ENCODE measurements at regions of chr14 and their contacts with region 1.

Region 1: DNA sequence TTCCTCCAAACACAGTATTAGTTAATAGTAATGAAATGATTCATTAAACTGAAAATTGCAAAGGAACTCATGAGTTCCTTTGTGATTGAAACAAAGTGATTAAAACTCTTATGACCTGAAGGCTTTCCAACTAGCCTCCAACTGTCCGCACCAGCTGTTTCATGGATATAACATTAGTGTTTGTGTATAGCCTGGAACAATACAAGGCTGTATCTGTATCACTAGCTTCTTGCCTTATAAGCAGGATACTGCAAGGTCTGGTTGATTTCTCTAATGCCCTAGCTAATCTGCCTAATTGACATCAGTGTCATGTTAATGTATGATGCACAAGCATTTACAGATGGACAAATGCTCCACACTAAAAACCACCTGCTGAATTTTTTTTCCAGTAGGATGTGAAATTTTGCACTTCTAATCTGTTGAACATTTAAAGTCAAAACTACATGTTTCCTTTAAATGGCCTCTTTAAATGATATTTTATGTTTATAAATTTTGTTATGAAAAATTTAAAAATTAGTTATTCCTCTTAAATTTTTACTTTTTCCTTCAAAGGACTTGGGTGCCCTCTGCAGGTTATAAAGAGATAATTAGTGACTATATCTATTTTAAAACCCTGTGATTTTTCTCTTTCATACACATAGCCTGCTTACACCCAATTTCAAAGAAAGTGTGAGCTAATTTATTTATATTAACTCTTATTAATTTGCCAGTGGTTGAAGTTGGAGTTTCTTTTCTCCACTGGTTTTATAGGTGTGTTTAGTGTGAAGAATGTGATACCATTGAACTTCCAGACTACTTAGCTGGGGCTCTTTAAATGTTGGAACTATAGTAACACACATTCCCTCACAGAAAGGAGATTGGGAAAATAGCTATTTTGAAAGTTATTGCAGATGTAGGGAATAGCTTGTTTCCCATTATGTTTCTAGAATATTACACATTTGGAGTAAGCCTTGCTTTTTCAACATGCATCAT is 25.4 kb downstream of the AP5M1 start:
- DNase-seq: peak in 2 of 9 experiments; percentile 19 to 28
- ATAC-seq: no peak
- H3K4me3 ChIP-seq: no peak overlapping the region
- H3K4me3 Mint-ChIP-seq: no peak overlapping the region
- H3K27ac ChIP-seq: no peak overlapping the region
- H3K27ac Mint-ChIP-seq: no peak overlapping the region
- H3K4me1 ChIP-seq: no peaks in the 10 kb centered on the region
- H3K4me1 Mint-ChIP-seq: no peaks in the 10 kb centered on the region
- H3K27me3 ChIP-seq: no peaks in the 10 kb centered on the region
- H3K27me3 Mint-ChIP-seq: no peaks in the 10 kb centered on the region
- CTCF ChIP-seq: peak; percentile 53

Region 2: GRCh38 chr14:56963381-56963780 is 330.8 kb before region 1 on chr14:
- CTCF ChIA-PET with region 1: no interaction called
- POLR2A ChIA-PET with region 1: no interaction called
- intact Hi-C with region 1: no loop called
- DNase-seq: no peak
- ATAC-seq: no peak
- H3K4me3 ChIP-seq: no peak overlapping the region
- H3K4me3 Mint-ChIP-seq: no peak overlapping the region
- H3K27ac ChIP-seq: no peak overlapping the region
- H3K27ac Mint-ChIP-seq: no peak overlapping the region
- H3K4me1 ChIP-seq: no peaks in the 10 kb centered on the region
- H3K4me1 Mint-ChIP-seq: no peaks in the 10 kb centered on the region
- H3K27me3 ChIP-seq: no peaks in the 10 kb centered on the region
- H3K27me3 Mint-ChIP-seq: peaks cover 8% of the 10 kb centered on the region
- CTCF ChIP-seq: no peak

Region 3: GRCh38 chr14:57209561-57209960 is 84.6 kb before region 1 on chr14:
- CTCF ChIA-PET with region 1: no interaction called
- POLR2A ChIA-PET with region 1: no interaction called
- intact Hi-C with region 1: loop called in 1 of 2 experiments (anchors 5 kb)
- DNase-seq: no peak
- ATAC-seq: no peak
- H3K4me3 ChIP-seq: no peak overlapping the region
- H3K4me3 Mint-ChIP-seq: no peak overlapping the region
- H3K27ac ChIP-seq: no peak overlapping the region
- H3K27ac Mint-ChIP-seq: no peak overlapping the region
- H3K4me1 ChIP-seq: no peaks in the 10 kb centered on the region
- H3K4me1 Mint-ChIP-seq: no peaks in the 10 kb centered on the region
- H3K27me3 ChIP-seq: no peaks in the 10 kb centered on the region
- H3K27me3 Mint-ChIP-seq: no peaks in the 10 kb centered on the region
- CTCF ChIP-seq: no peak

Region 4: DNA sequence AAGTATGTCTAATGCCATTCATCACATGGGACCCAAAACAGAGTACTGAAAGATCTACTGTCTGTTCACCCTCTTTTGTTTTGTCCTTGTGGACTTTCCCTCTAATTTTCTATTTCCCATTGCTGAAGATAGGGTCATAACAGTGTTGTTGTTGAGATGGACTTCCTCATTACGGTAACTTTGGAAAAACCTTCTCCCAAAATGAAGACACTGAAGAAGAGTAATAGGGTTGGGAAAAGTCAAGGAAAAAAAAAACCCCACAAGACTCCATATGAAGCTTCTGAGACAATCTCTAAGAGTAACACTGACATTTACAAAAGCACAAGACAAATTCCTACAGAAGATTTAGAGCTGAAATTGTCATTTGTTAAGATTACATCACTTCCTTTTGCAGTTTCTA is 62.1 kb before region 1 on chr14:
- CTCF ChIA-PET with region 1: no interaction called
- POLR2A ChIA-PET with region 1: no interaction called
- intact Hi-C with region 1: loop called in 1 of 2 experiments (anchors 5 kb)
- DNase-seq: no peak
- ATAC-seq: no peak
- H3K4me3 ChIP-seq: no peak overlapping the region
- H3K4me3 Mint-ChIP-seq: no peak overlapping the region
- H3K27ac ChIP-seq: no peak overlapping the region
- H3K27ac Mint-ChIP-seq: no peak overlapping the region
- H3K4me1 ChIP-seq: no peaks in the 10 kb centered on the region
- H3K4me1 Mint-ChIP-seq: no peaks in the 10 kb centered on the region
- H3K27me3 ChIP-seq: no peaks in the 10 kb centered on the region
- H3K27me3 Mint-ChIP-seq: no peaks in the 10 kb centered on the region
- CTCF ChIP-seq: no peak

Region 5: GRCh38 chr14:58353516-58354299 is 1059.6 kb after region 1 on chr14:
- CTCF ChIA-PET with region 1: no interaction called
- POLR2A ChIA-PET with region 1: no interaction called
- intact Hi-C with region 1: no loop called
- DNase-seq: peak in 2 of 9 experiments; percentile 6 to 36
- ATAC-seq: no peak
- H3K4me3 ChIP-seq: no peak overlapping the region
- H3K4me3 Mint-ChIP-seq: peak overlapping the region; percentile 72
- H3K27ac ChIP-seq: peak overlapping the region in 1 of 2 experiments; percentile 53
- H3K27ac Mint-ChIP-seq: peak overlapping the region; percentile 66
- H3K4me1 ChIP-seq: no peaks in the 10 kb centered on the region
- H3K4me1 Mint-ChIP-seq: peaks cover 34% of the 10 kb centered on the region
- H3K27me3 ChIP-seq: no peaks in the 10 kb centered on the region
- H3K27me3 Mint-ChIP-seq: no peaks in the 10 kb centered on the region
- CTCF ChIP-seq: no peak

Measured in CD8-positive, alpha-beta T cell (primary cell).